Activated B cell treated with CpG ODN at 0.5 μM for 24 hours (primary cell): ENCODE measurements at regions of chr5 and their contacts with region 1.

Region 1: GRCh38 chr5:15003511-15003920 is 131.9 kb upstream of the ANKH start:
- DNase-seq: no peak
- ATAC-seq: peak; percentile 96
- H3K4me3 Mint-ChIP-seq: no peak overlapping the region
- H3K27ac Mint-ChIP-seq: no peak overlapping the region
- H3K4me1 Mint-ChIP-seq: peaks cover 18% of the 10 kb centered on the region
- H3K27me3 Mint-ChIP-seq: peaks cover 2% of the 10 kb centered on the region
- CTCF ChIP-seq: peak; percentile 36

Region 2: DNA sequence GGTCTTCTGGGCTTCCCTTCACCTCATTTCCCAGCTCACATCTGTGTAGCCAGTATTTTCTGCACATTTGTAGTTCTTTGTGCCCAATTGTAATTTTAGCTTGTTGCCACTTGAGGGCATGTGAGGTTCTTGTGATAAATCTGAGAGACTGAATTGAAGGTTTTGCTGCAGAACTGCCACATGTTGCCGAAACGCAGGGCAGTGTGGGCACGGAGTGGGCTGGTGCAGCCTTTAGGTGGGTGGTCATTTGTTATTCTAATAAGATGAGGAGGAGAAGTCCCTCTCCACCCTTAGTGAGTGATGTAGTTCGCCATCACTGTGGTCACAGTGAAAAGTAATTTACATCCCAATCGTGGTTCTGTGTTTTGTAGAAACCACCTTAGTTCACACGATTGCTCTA is 317.8 kb before region 1 on chr5:
- CTCF ChIA-PET with region 1: interaction called, 21 read pairs
- POLR2A ChIA-PET with region 1: no interaction called
- intact Hi-C with region 1: loop called (anchors 1 kb)
- DNase-seq: peak; percentile 30
- ATAC-seq: peak; percentile 98
- H3K4me3 Mint-ChIP-seq: peak overlapping the region; percentile 44
- H3K27ac Mint-ChIP-seq: peak overlapping the region; percentile 67
- H3K4me1 Mint-ChIP-seq: peaks cover 15% of the 10 kb centered on the region
- H3K27me3 Mint-ChIP-seq: no peaks in the 10 kb centered on the region
- CTCF ChIP-seq: no peak

Region 3: GRCh38 chr5:14871210-14872069 is 132.1 kb before region 1 on chr5 and contains the start of gene ANKH:
- CTCF ChIA-PET with region 1: interaction called, 8 read pairs
- POLR2A ChIA-PET with region 1: no interaction called
- intact Hi-C with region 1: loop called (anchors 1 kb)
- DNase-seq: peak; percentile 86
- ATAC-seq: peak; percentile 88
- H3K4me3 Mint-ChIP-seq: peak within 1 kb of the TSS; percentile 87
- H3K27ac Mint-ChIP-seq: peak within 1 kb of the TSS; percentile 80
- H3K4me1 Mint-ChIP-seq: peaks cover 22% of the 10 kb centered on the region
- H3K27me3 Mint-ChIP-seq: no peaks in the 10 kb centered on the region
- CTCF ChIP-seq: no peak
- total RNA-seq, gene ANKH: 43.3 and 43.7 TPM in 2 replicates

Region 4: GRCh38 chr5:14946815-14947640 is 56.5 kb before region 1 on chr5:
- CTCF ChIA-PET with region 1: interaction called, 18 read pairs
- POLR2A ChIA-PET with region 1: no interaction called
- intact Hi-C with region 1: loop called (anchors 1 kb)
- DNase-seq: no peak
- ATAC-seq: peak; percentile 72
- H3K4me3 Mint-ChIP-seq: no peak overlapping the region
- H3K27ac Mint-ChIP-seq: no peak overlapping the region
- H3K4me1 Mint-ChIP-seq: no peaks in the 10 kb centered on the region
- H3K27me3 Mint-ChIP-seq: peaks cover 14% of the 10 kb centered on the region
- CTCF ChIP-seq: no peak

Region 5: DNA sequence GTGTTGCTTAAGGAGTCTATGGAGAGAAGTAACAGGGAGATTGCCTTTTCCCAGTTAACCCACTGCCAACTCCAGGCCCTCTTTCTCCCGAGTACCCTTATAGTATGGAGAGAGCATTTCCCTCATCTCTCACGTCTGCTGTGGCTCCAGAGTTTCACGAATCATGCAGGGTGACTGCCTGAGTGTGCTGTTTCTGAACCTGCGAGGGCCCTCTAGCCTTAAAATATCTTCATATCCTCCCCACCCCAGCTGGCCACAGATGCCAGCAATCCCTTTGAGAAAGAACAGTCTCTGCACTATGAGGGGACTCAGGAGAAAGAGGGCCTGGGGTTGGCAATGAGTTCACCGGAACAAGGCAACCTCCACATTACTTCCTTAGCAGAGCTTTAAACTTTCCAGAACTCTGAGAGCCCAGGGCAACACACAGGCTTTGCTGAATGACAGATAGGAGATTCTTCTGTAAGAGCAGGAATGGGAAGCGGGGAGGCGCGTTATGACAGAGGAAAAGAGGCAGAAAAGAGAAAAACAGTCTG is 50.4 kb before region 1 on chr5:
- CTCF ChIA-PET with region 1: interaction called, 67 read pairs
- POLR2A ChIA-PET with region 1: interaction called, 4 read pairs
- intact Hi-C with region 1: loop called (anchors 1 kb)
- DNase-seq: no peak
- ATAC-seq: no peak
- H3K4me3 Mint-ChIP-seq: no peak overlapping the region
- H3K27ac Mint-ChIP-seq: no peak overlapping the region
- H3K4me1 Mint-ChIP-seq: peaks cover 4% of the 10 kb centered on the region
- H3K27me3 Mint-ChIP-seq: peaks cover 10% of the 10 kb centered on the region
- CTCF ChIP-seq: no peak

Region 6: DNA sequence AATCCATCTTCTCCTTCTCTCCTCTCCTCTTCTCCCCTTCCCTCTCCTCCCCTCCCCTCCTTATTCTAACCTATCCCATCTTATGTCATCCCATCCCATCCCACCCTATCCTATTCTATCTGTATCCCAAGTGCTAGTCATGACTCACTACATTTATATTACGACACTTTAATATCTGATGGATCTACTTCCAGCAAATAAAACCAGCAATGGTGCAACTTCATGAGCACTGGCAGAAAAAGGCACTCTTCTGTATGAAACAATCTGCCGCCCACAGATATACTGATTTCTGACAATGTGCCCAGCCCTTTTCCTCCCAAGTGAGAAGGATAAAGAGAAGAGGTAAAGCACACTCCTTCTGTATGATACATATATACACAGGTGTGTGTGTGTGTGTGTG is 45.3 kb before region 1 on chr5:
- CTCF ChIA-PET with region 1: interaction called, 67 read pairs
- POLR2A ChIA-PET with region 1: interaction called, 4 read pairs
- intact Hi-C with region 1: loop called (anchors 1 kb)
- DNase-seq: no peak
- ATAC-seq: no peak
- H3K4me3 Mint-ChIP-seq: no peak overlapping the region
- H3K27ac Mint-ChIP-seq: no peak overlapping the region
- H3K4me1 Mint-ChIP-seq: peaks cover 4% of the 10 kb centered on the region
- H3K27me3 Mint-ChIP-seq: peaks cover 6% of the 10 kb centered on the region
- CTCF ChIP-seq: no peak

Region 7: GRCh38 chr5:14986413-14986812 is 17.1 kb before region 1 on chr5:
- CTCF ChIA-PET with region 1: interaction called, 8 read pairs
- POLR2A ChIA-PET with region 1: interaction called, 4 read pairs
- intact Hi-C with region 1: loop called (anchors 2 kb)
- DNase-seq: no peak
- ATAC-seq: no peak
- H3K4me3 Mint-ChIP-seq: no peak overlapping the region
- H3K27ac Mint-ChIP-seq: no peak overlapping the region
- H3K4me1 Mint-ChIP-seq: no peaks in the 10 kb centered on the region
- H3K27me3 Mint-ChIP-seq: no peaks in the 10 kb centered on the region
- CTCF ChIP-seq: no peak